Natural killer cell (primary cell): ENCODE measurements at regions of chr11 and their contacts with region 1.

Region 1: DNA sequence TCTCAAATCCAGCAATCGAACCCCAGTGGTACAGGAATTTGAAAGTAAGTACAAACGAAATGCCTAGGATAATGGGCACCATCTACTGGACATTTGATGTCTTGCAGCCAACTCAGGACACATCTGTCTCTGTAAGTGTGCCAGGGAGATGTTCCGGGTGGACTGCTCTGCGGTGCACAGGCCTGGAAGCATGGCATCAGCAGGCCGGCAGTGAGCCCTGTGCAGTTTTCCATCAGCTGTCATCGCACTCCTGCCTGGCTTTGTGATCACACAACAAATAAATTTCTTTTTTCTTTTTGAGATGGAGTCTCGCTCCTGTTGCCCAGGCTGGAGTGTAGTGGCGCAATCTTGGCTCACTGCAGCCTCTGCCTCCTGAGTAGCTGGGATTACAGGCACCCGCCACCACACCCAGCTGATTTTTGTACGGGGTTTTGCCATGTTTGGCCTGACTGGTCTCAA is 71.0 kb downstream of the JAM3 start:
- DNase-seq: peak in 1 of 2 donors; percentile 77
- ATAC-seq: peak in 2 of 3 donors; percentile 38 to 77
- H3K4me3 ChIP-seq: no peak overlapping the region
- H3K4me3 Mint-ChIP-seq: no peak overlapping the region
- H3K27ac ChIP-seq: no peak overlapping the region
- H3K27ac Mint-ChIP-seq: no peak overlapping the region
- H3K4me1 ChIP-seq: no peaks in the 10 kb centered on the region
- H3K4me1 Mint-ChIP-seq: peaks cover 6 to 19% of the 10 kb centered on the region in 2 donors
- H3K27me3 ChIP-seq: no peaks in the 10 kb centered on the region
- H3K27me3 Mint-ChIP-seq: peaks cover 5 to 7% of the 10 kb centered on the region in 2 donors
- CTCF ChIP-seq: peak; percentile 56

Region 2: GRCh38 chr11:133927690-133928627 is 211.9 kb before region 1 on chr11:
- intact Hi-C with region 1: loop called (anchors 2 kb)
- DNase-seq: peak in 1 of 2 donors; percentile 80
- ATAC-seq: peak; percentile 62 to 84 (median 75)
- H3K4me3 ChIP-seq: no peak overlapping the region
- H3K4me3 Mint-ChIP-seq: peak overlapping the region; percentile 82
- H3K27ac ChIP-seq: no peak overlapping the region
- H3K27ac Mint-ChIP-seq: no peak overlapping the region
- H3K4me1 ChIP-seq: peaks cover 15% of the 10 kb centered on the region
- H3K4me1 Mint-ChIP-seq: peaks cover 7 to 13% of the 10 kb centered on the region in 2 donors
- H3K27me3 ChIP-seq: no peaks in the 10 kb centered on the region
- H3K27me3 Mint-ChIP-seq: peaks cover 3 to 6% of the 10 kb centered on the region in 2 donors
- CTCF ChIP-seq: peak; percentile 44

Region 3: GRCh38 chr11:134050541-134051383 is 89.1 kb before region 1 on chr11:
- intact Hi-C with region 1: loop called (anchors 2 kb)
- DNase-seq: peak; percentile 66 to 89
- ATAC-seq: peak; percentile 89 to 100 (median 100)
- H3K4me3 ChIP-seq: no peak overlapping the region
- H3K4me3 Mint-ChIP-seq: no peak overlapping the region
- H3K27ac ChIP-seq: no peak overlapping the region
- H3K27ac Mint-ChIP-seq: no peak overlapping the region
- H3K4me1 ChIP-seq: peaks cover 9% of the 10 kb centered on the region
- H3K4me1 Mint-ChIP-seq: no peaks in the 10 kb centered on the region
- H3K27me3 ChIP-seq: no peaks in the 10 kb centered on the region
- H3K27me3 Mint-ChIP-seq: peaks cover 31 to 34% of the 10 kb centered on the region in 2 donors
- CTCF ChIP-seq: peak; percentile 86